ENCODE measurements at regions of chr2 and their contacts with region 1.

Region 1: DNA sequence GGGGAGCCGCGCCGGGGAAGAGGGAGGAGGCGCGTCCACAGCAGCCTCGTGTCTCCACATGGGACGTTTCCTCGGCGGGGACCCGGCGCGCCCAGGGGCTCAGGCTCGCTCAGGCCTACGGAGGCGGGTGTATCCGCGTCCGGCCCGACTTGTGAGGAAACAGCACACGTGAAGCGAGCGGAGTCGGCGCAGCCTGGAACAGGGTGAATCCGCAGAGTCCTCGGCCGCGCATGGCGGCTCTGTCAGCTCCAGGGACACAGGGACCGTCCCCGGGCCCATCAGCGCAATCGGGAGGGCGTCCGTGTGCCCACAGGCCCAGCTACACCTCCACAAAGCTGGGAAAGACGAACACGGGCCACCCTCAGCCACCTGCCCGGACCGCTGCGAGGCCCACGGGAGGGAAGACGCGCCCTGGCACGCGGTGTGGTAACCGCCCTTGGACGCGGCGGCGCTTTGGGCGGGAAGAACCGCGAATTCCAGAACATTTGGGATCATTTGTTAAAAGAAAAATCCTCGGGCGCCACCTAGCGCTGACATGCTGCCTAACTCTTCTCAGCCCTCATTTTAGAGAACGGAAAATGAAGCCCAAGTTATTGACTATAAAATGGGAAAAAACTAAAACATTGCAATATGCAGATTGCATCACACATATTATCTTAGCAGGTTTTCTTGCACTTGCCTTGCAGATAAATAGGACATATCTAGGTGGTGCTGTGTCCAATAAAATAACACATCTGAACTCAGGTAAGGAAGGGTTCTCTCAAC is 40.4 kb downstream of the TMEM18 start:
- DNase-seq: peak; percentile 72
- H3K4me3 Mint-ChIP-seq: no peak overlapping the region
- H3K27ac Mint-ChIP-seq: no peak overlapping the region
- H3K4me1 Mint-ChIP-seq: peaks cover 16% of the 10 kb centered on the region
- H3K27me3 Mint-ChIP-seq: no peaks in the 10 kb centered on the region
- CTCF ChIP-seq: peak; percentile 67

Region 2: DNA sequence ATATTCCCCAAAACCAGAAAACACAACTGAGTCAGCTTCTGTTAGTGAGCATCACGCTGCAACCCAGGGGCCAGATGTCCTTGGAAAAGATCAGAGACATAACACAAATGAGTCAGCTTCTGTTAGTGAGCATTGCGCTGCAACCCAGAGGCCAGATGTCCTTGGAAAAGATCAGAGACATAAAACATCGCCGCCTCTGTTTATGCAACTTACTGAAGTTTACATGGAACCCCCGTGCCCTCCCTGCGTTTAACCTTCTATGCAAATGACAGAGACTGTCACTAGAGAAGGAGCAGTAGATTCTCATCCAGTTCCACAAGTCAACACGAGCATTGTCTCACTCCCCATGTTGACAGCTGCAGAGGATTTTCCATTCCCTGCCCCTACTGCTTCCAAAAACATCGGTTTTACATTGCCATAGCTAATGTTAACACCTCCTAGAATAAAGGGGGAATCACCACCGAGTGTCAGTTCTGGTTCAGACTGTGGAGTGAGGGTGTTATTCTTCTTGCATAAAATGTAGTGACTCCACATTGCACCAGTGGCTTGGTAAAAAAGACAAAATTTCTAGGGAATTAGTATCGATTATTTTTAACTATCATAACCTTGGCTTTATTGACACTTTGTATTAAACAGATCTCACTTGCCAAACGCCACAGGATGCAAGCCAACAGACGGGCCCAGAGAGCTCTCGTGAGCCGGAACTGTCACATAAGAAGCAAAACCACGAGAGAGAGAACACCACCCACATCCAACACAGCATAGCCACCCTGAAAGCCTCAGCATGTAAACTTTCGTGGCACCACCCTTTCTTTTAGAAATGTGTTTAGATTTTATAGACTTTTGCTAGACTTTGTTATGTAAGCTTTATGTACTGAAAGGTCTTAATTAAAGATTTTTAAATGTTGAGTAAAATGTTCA is 460.7 kb before region 1 on chr2:
- CTCF ChIA-PET with region 1: no interaction called
- POLR2A ChIA-PET with region 1: no interaction called
- intact Hi-C with region 1: loop called (anchors 1 kb)
- DNase-seq: peak; percentile 36
- H3K4me3 Mint-ChIP-seq: peak overlapping the region; percentile 50
- H3K27ac Mint-ChIP-seq: peak overlapping the region; percentile 37
- H3K4me1 Mint-ChIP-seq: peaks cover 31% of the 10 kb centered on the region
- H3K27me3 Mint-ChIP-seq: no peaks in the 10 kb centered on the region
- CTCF ChIP-seq: no peak

Region 3: DNA sequence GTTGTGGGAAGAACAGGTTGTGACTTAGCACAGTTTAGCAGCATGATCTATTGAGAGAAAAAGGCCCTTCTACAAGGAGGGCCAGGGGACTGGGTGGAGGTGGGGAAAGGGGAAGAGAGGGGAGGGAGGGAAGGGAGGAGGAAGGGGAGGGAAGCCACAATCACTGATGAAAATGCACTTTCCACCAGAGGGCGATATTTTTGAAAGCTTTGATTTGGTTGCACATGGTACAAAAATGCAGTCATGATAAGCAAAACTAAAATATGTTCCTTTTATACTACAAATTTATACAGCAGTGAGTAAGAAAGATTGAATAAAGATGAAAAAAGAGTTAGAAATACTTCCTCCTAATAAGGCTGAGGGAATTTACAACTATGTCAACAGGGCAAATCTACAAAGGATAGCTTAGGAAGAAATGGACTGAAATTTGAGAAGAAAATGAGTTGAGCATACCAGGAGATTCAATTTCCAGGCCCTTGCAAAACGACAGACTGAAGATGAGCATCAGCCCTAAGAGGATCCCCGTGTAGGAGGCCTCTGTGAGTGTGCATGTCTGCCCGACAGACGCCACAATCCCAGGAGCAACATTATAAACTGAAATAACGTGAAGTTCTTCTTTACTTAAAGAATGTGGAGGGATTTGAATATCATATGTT is 390.2 kb before region 1 on chr2:
- CTCF ChIA-PET with region 1: interaction called, 11 read pairs
- POLR2A ChIA-PET with region 1: no interaction called
- intact Hi-C with region 1: loop called (anchors 1 kb)
- DNase-seq: peak; percentile 70
- H3K4me3 Mint-ChIP-seq: no peak overlapping the region
- H3K27ac Mint-ChIP-seq: no peak overlapping the region
- H3K4me1 Mint-ChIP-seq: peaks cover 8% of the 10 kb centered on the region
- H3K27me3 Mint-ChIP-seq: no peaks in the 10 kb centered on the region
- CTCF ChIP-seq: peak; percentile 51

Region 4: DNA sequence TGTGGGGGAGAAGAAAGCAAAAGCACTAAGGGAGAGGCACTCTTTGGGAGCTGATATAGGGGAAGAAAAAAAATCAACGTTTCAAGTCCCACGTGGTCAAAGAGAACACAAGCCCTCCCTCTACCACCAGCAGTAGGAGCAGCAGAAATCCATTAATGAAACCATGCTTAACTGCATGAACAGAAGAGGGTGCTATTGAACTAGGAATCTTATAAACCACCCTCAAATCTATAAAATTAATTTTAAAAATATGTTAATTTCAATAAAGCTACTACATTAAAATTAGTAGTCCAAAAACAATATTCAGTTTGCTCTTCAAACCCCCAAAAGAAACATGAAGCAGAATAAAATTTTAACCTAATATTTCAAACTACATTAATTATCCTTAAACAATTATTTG is 107.4 kb before region 1 on chr2:
- CTCF ChIA-PET with region 1: interaction called, 88 read pairs
- POLR2A ChIA-PET with region 1: interaction called, 12 read pairs
- intact Hi-C with region 1: loop called (anchors 1 kb)
- DNase-seq: peak; percentile 50
- H3K4me3 Mint-ChIP-seq: no peak overlapping the region
- H3K27ac Mint-ChIP-seq: no peak overlapping the region
- H3K4me1 Mint-ChIP-seq: peaks cover 3% of the 10 kb centered on the region
- H3K27me3 Mint-ChIP-seq: no peaks in the 10 kb centered on the region
- CTCF ChIP-seq: peak; percentile 50